ENCODE measurements at regions of chr1 and their contacts with region 1.

Region 1: DNA sequence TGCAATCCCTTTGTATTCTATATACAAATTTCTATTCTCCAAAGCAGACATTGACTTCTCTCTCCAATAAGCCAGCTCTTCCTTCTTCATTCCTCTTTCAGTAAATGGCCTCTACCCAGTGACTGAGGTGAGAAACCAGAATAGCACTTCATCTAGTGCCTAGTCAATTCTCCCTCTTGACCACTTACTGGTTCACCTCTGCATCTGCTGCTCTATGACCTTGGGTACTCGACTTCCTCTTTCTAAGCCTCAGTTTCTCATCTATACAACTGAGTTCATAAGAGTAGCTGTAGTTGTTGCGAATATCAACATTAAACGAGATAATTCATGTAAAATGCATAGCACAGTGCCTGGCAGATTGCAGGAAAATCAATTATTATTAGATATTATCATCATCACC is 12.4 kb downstream of the LYST start:
- DNase-seq: no peak
- H3K4me3 ChIP-seq: no peak overlapping the region
- H3K27ac ChIP-seq: no peak overlapping the region
- H3K4me1 ChIP-seq: no peaks in the 10 kb centered on the region
- H3K27me3 ChIP-seq: no peaks in the 10 kb centered on the region
- CTCF ChIP-seq: no peak
- EP300 ChIP-seq: no peak
- POLR2A ChIP-seq: no peak
- RAD21 ChIP-seq: no peak

Region 2: GRCh38 chr1:235866913-235867845 is 12.8 kb after region 1 on chr1:
- CTCF ChIA-PET with region 1: interaction called, 11 read pairs
- POLR2A ChIA-PET with region 1: interaction called, 3 read pairs
- DNase-seq: peak; percentile 88 to 99
- H3K4me3 ChIP-seq: peak overlapping the region; percentile 72 to 96 (median 80)
- H3K27ac ChIP-seq: peak overlapping the region; percentile 11
- H3K4me1 ChIP-seq: no peaks in the 10 kb centered on the region; a peak in 1 of 7 replicates
- H3K27me3 ChIP-seq: peaks cover 2 to 17% (median 11%) of the 10 kb centered on the region in 4 experiments
- CTCF ChIP-seq: no peak
- EP300 ChIP-seq: no peak; a peak in 1 of 3 replicates
- POLR2A ChIP-seq: peak in 1 of 2 experiments; percentile 71; a peak in 2 of 3 replicates
- RAD21 ChIP-seq: no peak

Measured in H1 (cell line).